Left cardiac atrium (tissue), 4 donors: ENCODE measurements at regions of chr16 and their contacts with region 1.

Region 1: DNA sequence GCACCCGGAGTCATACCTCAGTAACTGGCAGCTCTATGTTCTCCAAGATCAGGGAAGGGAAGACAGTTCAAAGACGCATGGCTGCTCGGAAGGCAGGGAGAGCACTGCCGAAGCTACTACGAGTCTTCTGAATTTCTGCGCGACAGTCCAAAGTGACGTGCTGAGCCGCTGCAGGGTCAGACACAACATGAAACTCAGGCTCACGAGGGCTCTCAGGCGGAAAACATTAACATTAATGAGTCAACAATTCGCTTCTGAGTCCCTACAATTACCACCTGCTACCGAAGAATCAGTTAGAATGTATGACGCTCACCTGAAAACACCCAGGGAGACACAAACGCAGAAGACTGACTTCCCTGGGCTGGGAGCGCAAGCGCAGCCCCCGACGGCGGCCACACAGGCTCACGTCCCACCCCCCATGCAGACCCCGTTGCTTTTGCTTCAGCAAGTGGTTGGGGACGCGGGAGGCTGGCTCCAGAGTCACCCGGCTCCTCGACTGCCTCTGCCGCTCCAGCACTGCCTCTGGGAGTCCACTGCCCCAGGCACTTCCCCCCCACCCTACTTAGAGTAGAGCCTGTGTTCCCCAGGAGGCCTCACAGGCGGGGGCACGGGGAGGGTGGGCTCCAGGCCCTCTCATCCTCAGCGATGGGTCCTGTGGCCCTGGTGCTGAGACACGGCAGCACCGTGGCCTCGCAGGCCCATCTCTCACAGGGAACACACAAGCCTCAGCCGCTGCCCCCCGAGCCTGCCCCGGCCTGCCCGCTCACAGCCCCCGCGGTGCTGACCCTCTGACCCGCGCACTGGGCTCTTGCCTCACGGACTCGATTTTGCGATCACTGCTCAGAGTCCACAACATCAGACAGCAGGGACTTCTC is 38.9 kb downstream of the LMF1 start:
- DNase-seq: no peak
- ATAC-seq: no peak

Region 2: DNA sequence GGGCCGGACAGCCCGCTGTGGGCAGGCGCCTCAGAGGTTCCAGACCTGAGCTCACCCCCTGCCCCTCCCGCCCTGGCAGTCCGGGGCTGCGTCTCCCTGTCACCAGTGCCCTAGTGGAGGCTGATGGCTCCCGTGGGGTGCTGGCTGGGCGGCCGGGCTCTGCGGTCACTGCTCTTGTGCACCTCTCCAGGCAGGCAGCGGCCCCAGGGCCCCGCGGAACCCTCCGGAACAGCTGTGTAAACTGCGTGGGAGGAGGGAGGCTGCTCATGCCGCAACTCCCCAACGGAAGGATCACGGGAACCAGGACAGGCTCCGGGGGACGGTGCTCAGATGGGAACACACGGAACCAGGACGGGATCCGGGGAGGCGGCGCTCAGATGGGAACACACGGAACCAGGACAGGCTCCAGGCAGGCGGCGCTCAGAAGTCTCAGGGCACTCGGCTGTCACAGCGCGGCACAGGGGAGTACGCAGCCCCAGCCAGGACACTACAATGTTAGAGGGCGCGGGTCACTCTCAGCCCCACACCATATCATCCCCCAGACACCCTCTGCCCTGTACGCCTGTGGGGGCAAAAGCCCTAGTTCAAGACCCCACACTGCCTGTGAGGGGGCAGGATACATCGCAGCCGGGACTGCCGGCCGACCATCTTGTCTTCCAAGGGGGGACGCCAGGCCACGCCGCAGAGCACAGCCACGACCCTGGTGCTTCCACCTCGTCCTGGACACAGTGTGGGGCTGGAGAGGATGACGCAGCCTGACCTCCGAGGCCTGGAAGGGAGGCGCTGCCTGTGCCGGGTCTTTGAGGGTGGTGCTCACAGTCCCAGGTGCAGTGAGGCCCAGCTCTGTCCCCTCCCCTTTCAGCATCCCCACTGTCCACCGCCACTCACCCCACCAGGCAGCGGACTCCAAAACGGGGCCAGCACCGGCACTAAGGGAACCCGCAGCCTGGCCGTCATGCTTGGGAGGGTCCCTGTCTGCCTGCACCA is 57.2 kb before region 1 on chr16:
- intact Hi-C with region 1: loop called in 1 of 2 experiments (anchors 5 kb)
- DNase-seq: peak; percentile 13
- ATAC-seq: no peak